ENCODE measurements at regions of chr1 and their contacts with region 1.

Region 1: DNA sequence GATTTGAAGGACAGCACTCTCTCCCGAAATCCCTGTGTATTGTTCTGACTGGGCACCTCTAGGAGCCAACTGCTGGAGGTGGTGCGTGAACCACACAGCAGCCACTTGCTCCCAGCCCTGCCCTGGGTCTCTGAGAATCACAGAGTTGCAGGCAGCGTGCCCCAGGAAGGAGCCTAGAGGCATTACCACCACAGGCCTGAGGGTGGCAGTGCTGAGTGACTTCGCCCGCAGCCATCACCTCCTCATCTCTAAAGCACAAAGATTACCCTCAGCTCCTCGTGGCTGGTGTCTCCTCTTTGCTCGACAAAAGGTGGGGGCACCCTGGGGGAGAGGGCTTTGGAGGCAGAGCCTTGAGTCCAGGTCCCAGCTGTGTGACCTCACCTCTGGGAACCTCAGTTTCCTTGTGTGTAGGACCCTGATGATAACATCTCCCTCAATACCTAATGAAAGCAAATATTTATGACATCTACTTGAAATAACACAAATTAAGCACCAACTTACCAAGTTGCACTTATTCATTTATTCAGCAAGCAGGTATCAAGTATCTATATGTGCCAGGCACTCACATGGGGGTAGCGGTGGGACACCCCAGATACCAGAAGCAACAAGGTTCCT is 86.3 kb downstream of the VWA5B1 start:
- DNase-seq: peak in 9 of 10 donors; percentile 57 to 96 (median 75)

Region 2: DNA sequence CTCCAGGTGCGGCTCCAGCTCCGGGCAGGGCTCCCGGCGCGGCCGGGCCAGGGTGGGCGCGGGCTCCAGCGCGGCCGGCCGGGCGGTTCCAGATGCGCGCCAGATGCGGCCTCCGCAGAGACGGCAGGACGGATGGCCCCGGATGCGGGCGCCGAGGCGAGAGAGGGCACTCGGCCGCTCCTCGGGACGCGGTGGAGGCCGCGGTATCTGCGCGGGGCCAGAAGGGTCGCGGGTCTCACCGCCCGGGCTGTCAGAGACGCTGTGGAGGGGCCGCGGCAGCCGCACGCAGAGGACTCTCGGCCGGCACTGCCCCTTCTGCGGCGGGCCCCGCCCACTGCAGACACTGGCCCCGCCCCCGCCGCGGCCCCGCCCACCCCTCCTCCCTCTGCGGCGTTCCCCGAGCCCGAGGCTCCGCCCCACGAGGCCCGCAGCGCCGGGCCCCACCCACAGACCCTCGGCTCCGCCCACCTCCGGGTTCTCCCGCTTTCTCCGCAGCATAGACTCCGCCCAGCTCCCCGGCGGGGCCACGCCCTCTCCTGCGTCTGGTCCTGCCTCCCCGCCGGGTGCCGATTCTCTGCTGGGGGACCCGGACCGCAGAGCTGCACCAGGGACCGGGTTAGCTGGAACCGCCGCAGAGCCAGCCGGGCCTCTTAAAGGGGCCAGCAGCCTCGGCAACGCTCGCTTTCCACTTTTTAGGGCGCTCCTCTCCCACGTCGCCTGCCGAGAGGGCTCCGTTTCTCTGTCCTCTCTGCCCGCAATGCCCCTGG is 1420.4 kb before region 1 on chr1 and contains the start of gene IFFO2:
- intact Hi-C with region 1: no loop called
- DNase-seq: peak; percentile 97 to 100 (median 99)

Region 3: GRCh38 chr1:19750101-19750881 is 626.7 kb before region 1 on chr1:
- intact Hi-C with region 1: no loop called
- DNase-seq: peak in 1 of 10 donors; percentile 24

Region 4: GRCh38 chr1:20058531-20058930 is 318.5 kb before region 1 on chr1:
- intact Hi-C with region 1: no loop called
- DNase-seq: peak in 3 of 10 donors; percentile 15 to 86 (median 32)

Region 5: DNA sequence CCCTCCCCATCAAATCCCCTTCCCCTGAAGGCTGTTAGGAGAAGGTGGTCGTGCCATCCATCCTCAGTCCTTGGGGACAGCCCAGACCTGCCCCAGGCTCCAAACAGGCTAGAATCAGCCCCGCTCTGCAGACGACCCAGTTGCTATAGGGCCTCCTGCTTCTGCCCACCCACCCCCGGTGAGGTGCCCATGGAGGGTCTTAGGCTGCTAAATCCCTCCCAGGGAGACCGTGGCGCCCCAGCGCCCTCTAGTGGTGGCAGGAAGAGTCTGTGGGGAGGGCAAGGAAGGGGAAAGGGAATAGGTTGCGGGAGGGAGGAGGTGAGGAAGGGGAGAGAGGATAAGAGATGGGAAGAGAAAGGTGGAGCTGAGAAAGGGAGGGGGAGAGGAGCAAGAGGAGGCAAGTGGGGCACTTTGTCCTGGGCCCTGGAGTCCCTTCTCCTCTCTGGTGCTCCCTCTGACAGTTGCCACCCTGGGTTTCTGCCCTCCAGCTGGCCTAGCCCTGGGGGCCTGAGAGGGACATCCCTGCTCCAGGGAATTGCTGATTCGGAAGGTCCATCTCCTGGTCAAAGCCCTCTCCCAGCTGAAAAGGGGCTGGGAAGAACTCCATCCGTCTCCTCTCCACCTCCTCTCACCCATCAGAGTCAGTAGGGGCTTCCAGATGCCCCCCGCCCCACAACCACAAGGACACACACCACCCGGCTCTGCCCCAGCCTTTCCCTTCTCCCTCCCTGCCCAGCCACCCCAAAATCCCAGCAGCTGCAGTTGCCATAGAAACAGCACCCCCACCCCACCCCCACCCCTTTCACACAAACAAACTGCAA is 53.6 kb after region 1 on chr1:
- intact Hi-C with region 1: loop called (anchors 5 kb)
- DNase-seq: peak in 7 of 10 donors; percentile 44 to 91 (median 58)

Region 6: GRCh38 chr1:20440785-20441200 is 63.8 kb after region 1 on chr1:
- intact Hi-C with region 1: no loop called
- DNase-seq: peak; percentile 69 to 97 (median 81)

Measured in posterior cingulate gyrus (tissue), 11 donors.